Activated T-helper 1 cell treated with anti-CD3 and anti-CD28 coated beads, Interleukin-12 subunit alpha, Interleukin-12 subunit beta, Interleukin-2, Interleukin-4 antibody, amounts not matched to agents 30 ng/mL and 10 ng/mL and 1 ng/mL, durations not matched to agents 14 hours and 24 hours and 36 hours (primary cell): ENCODE measurements at regions of chr11 and their contacts with region 1.

Region 1: GRCh38 chr11:27296497-27296896 is 66.5 kb downstream of the CCDC34 start:
- DNase-seq: no peak
- H3K4me3 Mint-ChIP-seq: no peak overlapping the region
- H3K27ac Mint-ChIP-seq: no peak overlapping the region
- H3K4me1 Mint-ChIP-seq: no peaks in the 10 kb centered on the region
- H3K27me3 Mint-ChIP-seq: peaks cover 3% of the 10 kb centered on the region

Region 2: DNA sequence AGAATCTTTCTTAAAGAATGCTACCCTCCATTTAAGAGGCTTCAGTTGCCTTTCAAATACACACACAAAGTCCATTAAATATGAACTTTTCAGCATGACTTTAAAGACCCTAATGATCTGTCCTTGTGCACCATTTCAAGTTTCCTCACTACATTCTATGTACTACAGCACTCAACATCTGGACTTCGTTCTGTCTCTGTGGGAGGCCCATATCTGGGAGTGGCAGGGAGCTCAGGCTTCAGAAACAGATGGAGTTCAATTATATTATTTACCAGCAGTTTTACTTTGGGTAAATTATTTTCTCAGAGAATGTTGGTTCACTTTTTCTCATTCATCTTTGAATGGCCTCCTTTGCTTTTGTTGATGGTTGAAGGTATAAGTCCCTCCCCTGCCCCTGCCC is 897.2 kb before region 1 on chr11:
- intact Hi-C with region 1: no loop called
- DNase-seq: no peak
- H3K4me3 Mint-ChIP-seq: no peak overlapping the region
- H3K27ac Mint-ChIP-seq: no peak overlapping the region
- H3K4me1 Mint-ChIP-seq: no peaks in the 10 kb centered on the region
- H3K27me3 Mint-ChIP-seq: no peaks in the 10 kb centered on the region

Region 3: DNA sequence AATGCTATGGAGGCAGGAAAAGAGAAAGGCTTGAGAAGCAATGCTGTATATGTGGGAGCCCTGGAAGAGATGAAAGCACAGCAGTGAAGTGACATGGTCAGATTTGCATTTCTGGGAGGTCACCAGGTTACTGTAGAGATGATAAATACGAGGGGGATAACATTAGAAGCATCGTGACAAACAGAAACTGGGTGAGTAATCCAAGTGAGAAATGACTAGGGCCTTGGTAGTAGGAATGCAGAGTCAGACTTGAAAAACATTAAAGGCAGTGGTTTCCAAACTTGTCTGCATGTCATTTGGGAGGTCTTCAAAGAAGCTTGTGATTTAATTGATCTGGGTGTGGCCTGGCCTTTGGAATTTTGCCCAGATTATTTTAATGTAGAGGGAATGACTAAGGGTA is 22.6 kb after region 1 on chr11:
- intact Hi-C with region 1: loop called (anchors 1 kb)
- DNase-seq: no peak
- H3K4me3 Mint-ChIP-seq: no peak overlapping the region
- H3K27ac Mint-ChIP-seq: no peak overlapping the region
- H3K4me1 Mint-ChIP-seq: no peaks in the 10 kb centered on the region
- H3K27me3 Mint-ChIP-seq: no peaks in the 10 kb centered on the region